ENCODE measurements at regions of chr2 and their contacts with region 1.

Region 1: DNA sequence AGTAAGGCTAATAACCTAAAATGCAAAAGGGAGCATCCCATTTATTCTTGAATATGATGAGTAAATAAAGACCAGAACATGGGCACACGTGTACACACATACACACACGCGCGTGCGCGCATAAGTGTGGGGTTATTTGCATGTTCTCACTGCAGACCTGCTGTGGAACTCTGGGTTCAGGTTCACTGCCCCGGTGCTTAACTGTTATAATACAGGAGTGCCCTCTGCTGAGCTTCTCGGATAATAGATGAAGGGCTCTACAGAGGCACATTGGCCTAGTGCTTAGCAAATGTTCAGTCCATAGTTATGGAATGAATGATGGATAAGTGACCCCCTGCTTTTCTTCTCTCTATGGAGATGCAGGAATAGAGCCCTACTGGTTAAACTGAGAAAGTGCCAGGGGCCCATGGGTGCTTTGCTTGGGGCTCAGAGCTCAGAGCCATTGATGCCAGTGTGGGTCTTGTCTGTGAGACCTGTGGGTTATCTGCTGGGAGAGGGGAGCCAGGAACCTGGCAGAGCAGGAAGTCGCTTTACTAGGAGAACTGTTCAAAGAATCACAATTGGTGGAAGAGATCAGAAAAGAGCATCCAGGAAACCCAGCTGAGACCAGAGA is 3.6 kb upstream of the ARL4C start:
- DNase-seq: peak; percentile 39 to 83 (median 77)
- ATAC-seq: peak; percentile 68
- H3K4me3 ChIP-seq: peak overlapping the region; percentile 32
- H3K4me3 Mint-ChIP-seq: peak overlapping the region; percentile 44 to 91 (median 73)
- H3K27ac ChIP-seq: peak overlapping the region; percentile 91
- H3K27ac Mint-ChIP-seq: peak overlapping the region; percentile 56 to 98 (median 92)
- H3K4me1 ChIP-seq: peaks cover 24 to 30% of the 10 kb centered on the region in 2 donors
- H3K4me1 Mint-ChIP-seq: peaks cover 17 to 34% (median 31%) of the 10 kb centered on the region in 7 donors
- H3K27me3 ChIP-seq: no peaks in the 10 kb centered on the region
- H3K27me3 Mint-ChIP-seq: peaks cover 0 to 34% (median 0%) of the 10 kb centered on the region in 5 donors

Region 2: GRCh38 chr2:233854241-233854981 is 646.1 kb before region 1 on chr2 and contains the start of gene HJURP:
- CTCF ChIA-PET with region 1: no interaction called
- POLR2A ChIA-PET with region 1: no interaction called
- intact Hi-C with region 1: loop called (anchors 2 to 5 kb)
- DNase-seq: peak; percentile 76 to 92 (median 87)
- ATAC-seq: peak; percentile 96
- H3K4me3 ChIP-seq: peak within 1 kb of the TSS; percentile 97
- H3K4me3 Mint-ChIP-seq: peak within 1 kb of the TSS; percentile 83 to 98 (median 92)
- H3K27ac ChIP-seq: peak within 1 kb of the TSS; percentile 26
- H3K27ac Mint-ChIP-seq: peak within 1 kb of the TSS in 8 of 9 donors; percentile 53 to 95 (median 75)
- H3K4me1 ChIP-seq: peaks cover 0 to 6% of the 10 kb centered on the region in 2 donors
- H3K4me1 Mint-ChIP-seq: peaks cover 12 to 68% (median 18%) of the 10 kb centered on the region in 7 donors
- H3K27me3 ChIP-seq: no peaks in the 10 kb centered on the region
- H3K27me3 Mint-ChIP-seq: peaks cover 0 to 7% (median 5%) of the 10 kb centered on the region in 5 donors
- total RNA-seq, gene HJURP: 0.11 to 67.1 (median 0.27) TPM in 3 of 5 experiments, not detected in the others

Region 3: DNA sequence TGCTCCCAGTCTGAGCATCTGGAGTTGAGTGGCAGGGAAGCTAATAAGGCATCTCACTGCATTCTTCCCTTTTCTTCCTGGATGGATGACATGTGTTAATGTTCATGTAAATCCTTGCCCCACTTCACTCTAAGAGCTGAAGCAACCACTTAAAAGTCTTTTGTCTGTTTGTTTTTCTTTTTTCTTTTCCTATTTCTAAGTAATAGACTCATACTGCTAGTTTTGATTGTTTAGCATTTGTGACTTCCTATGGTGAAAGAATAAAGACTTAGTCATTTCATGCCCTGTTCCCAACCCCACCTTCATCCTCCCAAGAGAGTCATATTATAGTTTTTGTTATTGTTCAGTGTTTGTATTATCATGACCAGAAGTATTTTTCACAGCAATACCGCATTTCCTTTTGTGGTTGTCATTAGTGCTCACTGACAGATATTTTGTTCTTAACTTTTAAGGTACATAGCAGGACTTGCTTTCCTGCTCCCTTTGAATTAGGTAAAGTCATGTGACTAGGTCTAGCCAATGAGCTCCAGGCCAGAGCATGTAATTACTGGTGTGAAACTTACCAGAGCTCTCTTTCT is 468.1 kb before region 1 on chr2:
- CTCF ChIA-PET with region 1: no interaction called
- POLR2A ChIA-PET with region 1: no interaction called
- intact Hi-C with region 1: loop called in 1 of 2 experiments (anchors 5 kb)
- DNase-seq: peak in 4 of 9 donors; percentile 16 to 40 (median 33)
- ATAC-seq: peak; percentile 82
- H3K4me3 ChIP-seq: no peak overlapping the region
- H3K4me3 Mint-ChIP-seq: peak overlapping the region in 5 of 10 donors; percentile 4 to 54 (median 39)
- H3K27ac ChIP-seq: no peak overlapping the region
- H3K27ac Mint-ChIP-seq: peak overlapping the region in 7 of 9 donors; percentile 1 to 72 (median 15)
- H3K4me1 ChIP-seq: peaks cover 13 to 55% of the 10 kb centered on the region in 2 donors
- H3K4me1 Mint-ChIP-seq: peaks cover 19 to 42% (median 20%) of the 10 kb centered on the region in 7 donors
- H3K27me3 ChIP-seq: no peaks in the 10 kb centered on the region
- H3K27me3 Mint-ChIP-seq: peaks cover 0 to 43% (median 0%) of the 10 kb centered on the region in 5 donors

Region 4: GRCh38 chr2:234218266-234219180 is 282.0 kb before region 1 on chr2:
- CTCF ChIA-PET with region 1: no interaction called
- POLR2A ChIA-PET with region 1: no interaction called
- intact Hi-C with region 1: loop called in 1 of 2 experiments (anchors 5 kb)
- DNase-seq: peak in 5 of 9 donors; percentile 20 to 34 (median 30)
- ATAC-seq: peak; percentile 26
- H3K4me3 ChIP-seq: no peak overlapping the region
- H3K4me3 Mint-ChIP-seq: peak overlapping the region in 9 of 10 donors; percentile 29 to 76 (median 62)
- H3K27ac ChIP-seq: no peak overlapping the region
- H3K27ac Mint-ChIP-seq: peak overlapping the region in 6 of 9 donors; percentile 9 to 81 (median 34)
- H3K4me1 ChIP-seq: peaks cover 25 to 36% of the 10 kb centered on the region in 2 donors
- H3K4me1 Mint-ChIP-seq: peaks cover 26 to 59% (median 53%) of the 10 kb centered on the region in 7 donors
- H3K27me3 ChIP-seq: no peaks in the 10 kb centered on the region
- H3K27me3 Mint-ChIP-seq: no peaks in the 10 kb centered on the region

Region 5: DNA sequence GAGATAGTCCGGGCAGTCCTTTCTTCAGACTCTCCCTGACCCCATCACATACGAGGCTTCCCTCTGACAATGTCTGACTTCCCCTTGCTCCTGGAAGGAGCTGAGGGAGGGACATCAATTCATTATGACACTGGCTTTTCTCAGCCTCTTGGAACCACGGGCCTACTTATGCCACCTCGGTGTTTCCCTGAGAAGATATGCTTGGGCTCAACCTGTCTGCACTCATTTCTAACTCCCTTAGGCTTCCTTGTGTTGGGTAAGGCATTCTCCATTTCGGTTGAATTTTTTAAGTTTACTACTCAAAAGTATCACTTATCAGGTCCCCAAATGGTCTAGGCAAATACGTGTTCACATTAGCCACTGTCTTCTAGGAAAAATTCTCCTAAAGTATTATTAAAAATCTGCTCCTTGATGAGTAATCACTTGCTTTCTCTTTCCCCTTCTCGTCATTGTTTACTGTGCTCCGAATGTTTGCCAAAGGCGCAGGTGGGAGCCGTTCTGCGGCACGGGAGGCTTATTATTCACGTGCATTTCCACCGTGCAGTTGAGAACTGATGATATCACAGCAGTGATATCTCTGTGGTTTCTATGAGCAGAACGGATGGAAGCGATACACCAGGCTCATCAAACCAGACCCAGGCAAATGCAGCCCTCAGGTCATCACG is 36.7 kb before region 1 on chr2:
- CTCF ChIA-PET with region 1: interaction called, 4 read pairs
- POLR2A ChIA-PET with region 1: interaction called, 338 read pairs
- intact Hi-C with region 1: no loop called
- DNase-seq: peak; percentile 36 to 91 (median 87)
- ATAC-seq: peak; percentile 93
- H3K4me3 ChIP-seq: peak overlapping the region; percentile 26
- H3K4me3 Mint-ChIP-seq: peak overlapping the region; percentile 45 to 84 (median 76)
- H3K27ac ChIP-seq: peak overlapping the region; percentile 93
- H3K27ac Mint-ChIP-seq: peak overlapping the region; percentile 94 to 100 (median 96)
- H3K4me1 ChIP-seq: peaks cover 60 to 63% of the 10 kb centered on the region in 2 donors
- H3K4me1 Mint-ChIP-seq: peaks cover 49 to 97% (median 79%) of the 10 kb centered on the region in 7 donors
- H3K27me3 ChIP-seq: no peaks in the 10 kb centered on the region
- H3K27me3 Mint-ChIP-seq: no peaks in the 10 kb centered on the region

Region 6: GRCh38 chr2:234544659-234545611 is 44.4 kb after region 1 on chr2:
- CTCF ChIA-PET with region 1: interaction called, 5 read pairs
- POLR2A ChIA-PET with region 1: no interaction called
- intact Hi-C with region 1: loop called (anchors 1 to 2 kb)
- DNase-seq: peak; percentile 54 to 83 (median 69)
- ATAC-seq: peak; percentile 93
- H3K4me3 ChIP-seq: no peak overlapping the region
- H3K4me3 Mint-ChIP-seq: no peak overlapping the region
- H3K27ac ChIP-seq: no peak overlapping the region
- H3K27ac Mint-ChIP-seq: no peak overlapping the region
- H3K4me1 ChIP-seq: peaks cover 0 to 5% of the 10 kb centered on the region in 2 donors
- H3K4me1 Mint-ChIP-seq: peaks cover 0 to 9% (median 1%) of the 10 kb centered on the region in 7 donors
- H3K27me3 ChIP-seq: no peaks in the 10 kb centered on the region
- H3K27me3 Mint-ChIP-seq: peaks cover under 1 to 31% (median 13%) of the 10 kb centered on the region in 5 donors